GM12878 (cell line): ENCODE measurements at regions of chr11 and their contacts with region 1.

Region 1: DNA sequence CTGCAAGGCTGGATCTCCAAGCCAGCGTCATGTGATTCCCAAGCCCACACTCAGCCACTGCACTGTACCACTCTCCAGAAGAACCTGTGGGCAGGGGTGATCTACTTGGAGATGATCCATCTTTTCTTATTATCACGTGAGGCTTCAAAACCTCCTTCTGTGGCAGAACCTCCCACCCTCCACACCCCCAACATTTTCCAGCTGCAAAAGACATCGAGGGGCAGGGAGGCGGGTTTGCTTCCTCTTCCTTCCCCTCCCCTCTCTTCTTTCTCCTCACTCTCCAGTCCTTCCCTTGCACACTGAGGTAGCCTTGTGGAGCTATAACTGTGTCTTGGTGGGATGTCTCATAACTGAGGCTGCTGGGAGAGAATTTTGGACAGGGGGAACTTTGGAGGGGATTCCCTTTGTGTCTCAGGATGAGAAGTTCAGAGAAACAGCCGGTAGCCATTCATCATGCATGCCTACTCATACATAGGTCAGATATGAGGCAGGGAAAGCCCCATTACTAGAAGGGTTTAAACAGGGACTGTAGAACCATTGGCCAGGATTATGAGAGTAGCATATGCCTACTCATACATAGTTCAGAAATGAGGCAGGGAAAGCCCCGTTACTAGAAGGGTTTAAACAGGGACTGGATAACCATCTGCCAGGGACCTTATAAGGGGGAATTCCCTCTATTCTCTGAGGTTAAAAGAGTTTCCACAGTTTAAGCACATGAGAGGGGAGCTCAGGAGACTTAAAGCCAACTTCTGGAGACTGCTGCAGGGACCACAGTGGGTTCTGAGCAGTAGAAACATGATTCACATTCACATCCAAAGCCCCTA is 420.7 kb upstream of the CADM1 start:
- DNase-seq: peak; percentile 99
- ATAC-seq: peak; percentile 62
- H3K4me3 ChIP-seq: no peak overlapping the region
- H3K27ac ChIP-seq: peak overlapping the region; percentile 95
- H3K4me1 ChIP-seq: peaks cover 97% of the 10 kb centered on the region
- H3K27me3 ChIP-seq: no peaks in the 10 kb centered on the region
- CTCF ChIP-seq: 0 out of 6 replicates have a peak, but pooled peaks of 1 of the 3 experiments have one; percentile 0
- EP300 ChIP-seq: peak; percentile 94 to 95
- POLR2A ChIP-seq: peak; percentile 57; the same call in 1 of the 2 replicates
- RAD21 ChIP-seq: peak; percentile 32

Region 2: DNA sequence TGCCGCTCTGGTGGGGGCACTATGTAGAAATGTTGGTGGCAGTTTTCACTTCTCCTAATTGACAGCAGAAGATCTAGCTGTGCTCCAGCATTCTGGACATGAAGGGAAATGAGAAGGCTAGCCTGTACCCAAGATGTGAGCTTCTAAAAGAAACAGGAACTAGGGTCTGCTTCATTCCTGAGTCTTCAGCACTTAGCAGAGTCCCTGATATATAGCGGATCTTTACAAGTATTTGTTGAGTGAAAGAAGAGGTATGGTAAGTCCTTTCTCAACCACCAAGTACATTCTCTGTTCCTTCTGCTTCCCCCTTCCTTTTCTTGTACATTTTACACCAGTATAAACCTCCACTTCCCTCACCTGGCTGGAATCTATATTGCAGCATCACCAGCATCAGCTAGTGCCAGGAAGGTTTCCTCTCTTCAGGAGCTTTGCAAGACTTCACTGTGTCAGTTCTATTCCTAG is 12.4 kb before region 1 on chr11:
- CTCF ChIA-PET with region 1: interaction called, 61 read pairs
- POLR2A ChIA-PET with region 1: interaction called, 86 read pairs
- RAD21 ChIA-PET with region 1: interaction called, 140 read pairs
- SMC1A ChIA-PET with region 1: interaction called, 207 read pairs
- in situ Hi-C with region 1: no loop called
- intact Hi-C with region 1: no loop called
- DNase-seq: no peak
- ATAC-seq: peak; percentile 90
- H3K4me3 ChIP-seq: no peak overlapping the region; the same call in 1 of the 2 replicates
- H3K27ac ChIP-seq: peak overlapping the region; percentile 56
- H3K4me1 ChIP-seq: peaks cover 24% of the 10 kb centered on the region
- H3K27me3 ChIP-seq: no peaks in the 10 kb centered on the region
- CTCF ChIP-seq: peak; percentile 42 to 67 (median 48); a peak in 5 of 6 replicates
- EP300 ChIP-seq: no peak
- POLR2A ChIP-seq: no peak
- RAD21 ChIP-seq: peak; percentile 85

Region 3: DNA sequence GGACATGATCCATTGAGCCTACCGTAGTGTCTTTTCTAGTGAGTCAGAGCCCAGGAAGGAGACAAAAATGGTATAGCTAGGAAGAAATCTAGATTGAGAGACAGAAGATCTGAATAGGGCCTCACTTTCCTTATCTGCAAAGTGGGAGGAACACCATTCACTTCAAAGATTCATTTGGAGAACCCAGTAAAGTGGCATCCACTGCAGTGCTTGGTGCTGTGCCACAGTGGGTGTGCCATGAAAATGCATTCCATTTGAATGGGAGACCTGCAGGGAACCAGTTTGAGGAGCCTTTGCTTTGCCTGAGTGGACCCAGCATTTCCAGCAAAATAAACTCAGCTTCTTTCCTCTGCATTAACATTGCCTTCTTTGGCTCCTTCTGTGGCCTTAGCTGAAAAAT is 49.7 kb after region 1 on chr11:
- CTCF ChIA-PET with region 1: interaction called, 4 read pairs
- POLR2A ChIA-PET with region 1: interaction called, 10 read pairs
- RAD21 ChIA-PET with region 1: interaction called, 12 read pairs
- SMC1A ChIA-PET with region 1: interaction called, 19 read pairs
- in situ Hi-C with region 1: no loop called
- intact Hi-C with region 1: loop called (anchors 2 kb)
- DNase-seq: no peak
- ATAC-seq: peak; percentile 12
- H3K4me3 ChIP-seq: 0 out of 2 replicates have a peak overlapping the region, but pooled peaks have one; percentile 65
- H3K27ac ChIP-seq: no peak overlapping the region
- H3K4me1 ChIP-seq: peaks cover 4% of the 10 kb centered on the region; the same call in 1 of the 2 replicates
- H3K27me3 ChIP-seq: no peaks in the 10 kb centered on the region
- CTCF ChIP-seq: no peak
- EP300 ChIP-seq: no peak
- POLR2A ChIP-seq: no peak
- RAD21 ChIP-seq: no peak

Region 4: DNA sequence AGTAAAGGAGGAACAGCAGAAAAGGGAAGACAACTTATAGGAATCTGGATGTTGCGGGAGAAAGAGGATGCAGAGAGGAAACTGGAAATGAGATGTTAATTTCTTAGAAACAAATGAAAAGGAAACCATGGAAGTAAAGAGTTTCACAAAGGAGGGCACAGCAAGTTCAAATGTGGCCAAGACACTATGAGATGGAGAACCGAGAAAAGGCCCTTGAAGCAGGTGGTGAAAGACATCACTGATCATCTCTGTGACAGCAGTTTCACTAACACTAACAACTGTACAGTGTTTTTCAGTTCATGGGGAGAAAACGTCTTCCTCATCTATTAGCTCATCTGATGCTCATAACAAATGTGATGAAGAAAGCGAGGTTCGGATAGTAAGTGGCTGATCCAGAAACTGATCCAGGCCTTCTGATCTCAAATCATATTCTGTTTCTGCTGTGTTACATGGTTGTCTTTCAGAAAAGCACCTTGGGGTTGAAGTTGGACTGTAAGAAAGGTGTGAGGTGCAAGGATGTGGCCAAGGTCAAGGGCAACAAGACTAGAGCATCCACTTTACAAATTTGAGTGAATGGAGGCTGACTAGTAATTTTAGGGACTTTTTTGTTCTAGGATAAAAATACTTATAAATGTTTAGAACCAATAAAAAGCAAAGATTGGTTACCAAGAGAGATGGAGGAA is 71.3 kb after region 1 on chr11:
- CTCF ChIA-PET with region 1: interaction called, 39 read pairs
- POLR2A ChIA-PET with region 1: interaction called, 5 read pairs
- RAD21 ChIA-PET with region 1: interaction called, 23 read pairs
- SMC1A ChIA-PET with region 1: interaction called, 57 read pairs
- in situ Hi-C with region 1: loop called (anchors 5 kb)
- intact Hi-C with region 1: loop called (anchors 1 kb)
- DNase-seq: peak; percentile 89
- ATAC-seq: peak; percentile 96
- H3K4me3 ChIP-seq: no peak overlapping the region
- H3K27ac ChIP-seq: peak overlapping the region; percentile 79
- H3K4me1 ChIP-seq: peaks cover 25% of the 10 kb centered on the region
- H3K27me3 ChIP-seq: no peaks in the 10 kb centered on the region
- CTCF ChIP-seq: no peak
- EP300 ChIP-seq: peak; percentile 94 to 95; a peak in 3 of 4 replicates
- POLR2A ChIP-seq: no peak
- RAD21 ChIP-seq: no peak

Region 5: DNA sequence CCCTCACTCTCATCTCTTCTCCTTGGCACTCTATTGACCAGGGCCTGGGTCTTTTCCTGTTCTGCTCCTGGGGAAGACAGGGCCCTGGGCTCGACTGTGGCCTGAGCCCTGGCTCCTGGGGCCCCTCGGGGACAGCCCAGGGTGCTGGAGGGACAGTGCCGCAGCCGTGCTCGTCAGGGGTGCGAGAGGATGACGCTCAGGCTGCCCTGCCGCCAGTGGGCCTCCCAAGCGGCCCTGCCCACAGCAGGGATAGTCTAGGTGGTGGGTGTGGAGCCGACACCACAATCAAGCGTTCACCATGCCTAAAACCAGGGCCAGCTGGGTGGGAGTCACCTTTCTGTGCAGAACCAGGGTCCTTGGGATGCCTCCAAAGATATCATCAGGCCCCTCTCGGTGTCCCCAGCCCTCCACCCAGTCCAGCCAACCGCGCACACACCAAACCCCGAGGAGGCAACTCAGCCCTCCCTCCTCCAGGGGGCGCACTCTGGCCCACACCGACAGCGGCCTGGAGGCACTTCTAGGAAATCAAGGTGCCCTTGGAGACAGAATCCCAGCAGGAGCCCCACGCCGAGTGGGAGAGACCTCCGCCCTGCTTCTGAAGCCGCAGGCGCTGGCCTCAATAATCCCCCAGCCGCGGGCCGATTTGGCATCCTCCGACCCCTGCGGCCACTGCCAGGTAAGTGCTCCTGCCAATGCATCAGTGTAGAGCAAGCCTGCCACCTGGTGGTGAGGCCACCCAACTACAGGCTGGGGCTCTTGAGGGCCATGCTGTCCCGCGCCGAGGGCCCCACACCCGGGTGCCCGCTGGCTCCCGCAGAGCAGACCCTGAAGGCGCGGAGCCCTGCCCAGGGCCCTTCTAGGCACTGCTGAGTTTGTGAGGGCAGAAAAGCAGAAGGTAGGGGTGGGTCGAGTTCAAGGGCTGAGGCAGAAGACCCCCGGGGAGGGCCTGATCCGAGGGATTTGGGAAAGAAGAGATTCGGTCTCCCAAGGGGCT is 351.4 kb after region 1 on chr11:
- CTCF ChIA-PET with region 1: no interaction called
- POLR2A ChIA-PET with region 1: no interaction called
- RAD21 ChIA-PET with region 1: no interaction called
- SMC1A ChIA-PET with region 1: no interaction called
- in situ Hi-C with region 1: no loop called
- intact Hi-C with region 1: loop called (anchors 5 kb)
- DNase-seq: no peak
- ATAC-seq: peak; percentile 97
- H3K4me3 ChIP-seq: no peak overlapping the region
- H3K27ac ChIP-seq: no peak overlapping the region
- H3K4me1 ChIP-seq: no peaks in the 10 kb centered on the region
- H3K27me3 ChIP-seq: no peaks in the 10 kb centered on the region; a peak in 1 of 4 replicates
- CTCF ChIP-seq: peak; percentile 67 to 90 (median 87)
- EP300 ChIP-seq: no peak
- POLR2A ChIP-seq: no peak
- RAD21 ChIP-seq: peak; percentile 92